ENCODE measurements at regions of chr22 and their contacts with region 1.

Region 1: GRCh38 chr22:36470162-36470993 is 11.1 kb downstream of the TXN2 start:
- DNase-seq: peak; percentile 84
- ATAC-seq: peak; percentile 55 to 81

Region 2: GRCh38 chr22:36301384-36301828 is 169.0 kb before region 1 on chr22:
- intact Hi-C with region 1: loop called (anchors 1 to 10 kb)
- DNase-seq: peak; percentile 77
- ATAC-seq: peak; percentile 38 to 68

Measured in left cardiac atrium (tissue), 4 donors.